Activated naive CD4-positive, alpha-beta T cell treated with anti-CD3 and anti-CD28 coated beads, Interleukin-2, amount 10 ng/mL, durations not matched to agents 7 days and 5 days (primary cell): ENCODE measurements at regions of chr13 and their contacts with region 1.

Region 1: DNA sequence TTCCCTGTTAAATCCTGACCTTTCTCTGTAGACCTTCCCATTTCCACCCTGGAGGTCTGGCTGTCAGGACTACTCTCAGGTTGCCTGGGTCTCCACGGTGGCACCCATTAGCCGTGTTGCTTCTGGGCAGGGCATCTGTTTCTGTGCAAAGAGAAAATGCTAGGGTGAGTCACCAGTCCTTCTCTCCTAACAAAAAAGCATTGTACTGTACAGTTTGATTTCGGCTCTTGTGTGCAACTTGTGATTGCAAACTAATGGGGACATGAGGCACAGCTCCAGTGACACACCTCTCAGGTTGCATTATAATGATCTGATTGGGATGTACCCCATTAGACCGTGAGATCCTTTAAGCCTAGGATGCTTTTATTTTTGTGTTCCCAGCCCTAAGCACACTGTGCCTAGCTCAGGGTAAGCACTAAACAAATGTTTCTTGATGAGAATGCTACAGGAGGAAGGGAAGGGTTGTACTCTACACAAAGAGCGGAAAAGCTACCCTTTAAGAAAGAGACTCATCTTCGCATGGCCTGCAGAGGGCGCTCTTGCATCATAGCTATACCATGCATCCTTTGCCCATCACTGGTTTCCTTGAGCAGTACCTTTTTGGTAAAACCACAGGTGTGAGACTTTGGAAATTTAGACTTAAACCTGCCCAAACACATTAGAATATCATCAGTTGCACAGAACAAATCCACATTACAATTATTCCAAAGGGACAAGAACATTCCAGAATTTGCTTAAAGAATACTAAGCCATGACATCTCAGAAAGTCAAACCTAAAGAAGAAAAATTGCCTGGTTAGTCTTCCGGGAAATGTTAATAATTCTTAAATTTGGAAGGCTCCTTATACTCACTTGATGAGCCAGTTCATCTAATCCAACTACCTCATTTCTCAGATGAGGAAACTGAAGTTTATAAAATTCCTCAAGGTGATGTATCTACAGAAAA is 20.3 kb upstream of the TRIM13 start:
- DNase-seq: peak; percentile 83
- H3K4me3 Mint-ChIP-seq: no peak overlapping the region
- H3K27ac Mint-ChIP-seq: no peak overlapping the region
- H3K4me1 Mint-ChIP-seq: peaks cover 4% of the 10 kb centered on the region
- H3K27me3 Mint-ChIP-seq: peaks cover 7% of the 10 kb centered on the region

Region 2: DNA sequence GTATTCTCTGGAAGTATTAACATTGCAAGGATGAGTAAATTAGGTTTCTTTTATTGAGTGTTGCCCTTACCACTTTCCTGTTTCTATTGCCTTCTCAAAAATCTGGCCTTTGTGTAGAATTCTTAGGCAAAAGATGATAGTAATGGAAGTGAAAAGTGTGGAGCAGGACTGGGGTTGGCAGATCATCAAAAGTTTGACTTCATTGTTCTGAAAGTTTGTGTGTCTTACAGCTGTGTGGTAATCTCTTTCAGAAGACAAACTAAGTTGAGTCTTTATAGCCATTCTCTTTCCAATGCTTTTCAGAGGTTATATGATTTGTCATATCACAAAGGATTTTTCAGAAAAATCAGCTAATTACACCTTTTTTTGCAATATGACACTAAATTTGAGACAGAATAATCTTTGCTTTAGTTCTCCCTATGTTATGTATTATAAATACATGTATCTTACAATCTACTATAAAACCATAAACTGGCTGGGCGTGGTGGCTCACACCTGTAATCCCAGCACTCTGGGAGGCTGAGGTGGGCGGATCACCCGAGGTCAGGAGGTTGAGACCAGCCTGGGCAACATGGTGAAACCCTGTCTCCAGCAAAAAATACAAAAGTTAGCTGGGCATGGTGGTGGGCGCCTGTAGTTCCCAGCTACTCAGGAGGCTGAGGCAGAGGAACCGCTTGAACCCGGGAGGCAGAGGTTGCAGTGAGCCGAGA is 30.0 kb after region 1 on chr13:
- CTCF ChIA-PET with region 1: no interaction called
- DNase-seq: no peak
- H3K4me3 Mint-ChIP-seq: no peak overlapping the region
- H3K27ac Mint-ChIP-seq: no peak overlapping the region
- H3K4me1 Mint-ChIP-seq: peaks cover 8% of the 10 kb centered on the region
- H3K27me3 Mint-ChIP-seq: no peaks in the 10 kb centered on the region

Region 3: DNA sequence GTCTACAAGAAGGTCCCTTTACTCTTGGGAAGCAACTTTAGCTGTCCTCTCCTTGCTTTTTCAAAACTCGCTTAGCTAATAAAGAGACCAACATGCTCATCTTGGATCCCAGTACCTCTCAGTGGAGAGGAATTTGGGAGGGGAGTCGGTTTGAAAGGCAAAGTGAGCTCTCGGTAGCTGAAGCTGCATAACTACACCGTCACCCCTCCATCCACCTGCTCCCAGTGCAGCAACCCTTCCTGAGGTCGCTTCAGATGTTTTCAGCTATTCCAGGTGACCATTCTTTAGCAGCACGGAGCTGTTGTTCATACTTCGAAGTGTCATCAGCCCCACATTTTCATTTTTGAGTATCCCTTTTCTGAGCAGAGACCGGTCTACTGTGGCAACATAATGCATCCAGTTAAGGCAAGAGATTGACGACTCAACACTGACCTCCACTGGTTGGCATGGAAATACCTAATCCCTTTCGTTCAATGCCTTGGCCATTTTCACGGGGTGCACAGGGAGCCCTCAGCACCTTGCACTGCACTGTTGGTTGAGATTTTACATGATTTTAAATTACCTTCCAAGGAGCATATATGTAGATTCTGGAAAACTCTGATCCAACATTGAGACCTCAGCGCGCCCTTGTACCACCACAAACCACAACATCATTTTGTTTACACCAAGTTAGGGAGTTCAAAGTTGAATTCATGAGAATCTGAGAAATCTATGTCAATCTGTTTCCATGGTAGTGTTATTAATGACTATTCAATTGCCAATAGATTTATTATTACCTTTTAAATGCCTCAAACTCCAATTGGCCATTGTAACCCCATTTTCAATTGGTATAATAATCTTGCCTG is 824.7 kb after region 1 on chr13:
- CTCF ChIA-PET with region 1: interaction called, 10 read pairs
- DNase-seq: peak; percentile 80
- H3K4me3 Mint-ChIP-seq: no peak overlapping the region
- H3K27ac Mint-ChIP-seq: no peak overlapping the region
- H3K4me1 Mint-ChIP-seq: peaks cover 12% of the 10 kb centered on the region
- H3K27me3 Mint-ChIP-seq: peaks cover 16% of the 10 kb centered on the region

Region 4: DNA sequence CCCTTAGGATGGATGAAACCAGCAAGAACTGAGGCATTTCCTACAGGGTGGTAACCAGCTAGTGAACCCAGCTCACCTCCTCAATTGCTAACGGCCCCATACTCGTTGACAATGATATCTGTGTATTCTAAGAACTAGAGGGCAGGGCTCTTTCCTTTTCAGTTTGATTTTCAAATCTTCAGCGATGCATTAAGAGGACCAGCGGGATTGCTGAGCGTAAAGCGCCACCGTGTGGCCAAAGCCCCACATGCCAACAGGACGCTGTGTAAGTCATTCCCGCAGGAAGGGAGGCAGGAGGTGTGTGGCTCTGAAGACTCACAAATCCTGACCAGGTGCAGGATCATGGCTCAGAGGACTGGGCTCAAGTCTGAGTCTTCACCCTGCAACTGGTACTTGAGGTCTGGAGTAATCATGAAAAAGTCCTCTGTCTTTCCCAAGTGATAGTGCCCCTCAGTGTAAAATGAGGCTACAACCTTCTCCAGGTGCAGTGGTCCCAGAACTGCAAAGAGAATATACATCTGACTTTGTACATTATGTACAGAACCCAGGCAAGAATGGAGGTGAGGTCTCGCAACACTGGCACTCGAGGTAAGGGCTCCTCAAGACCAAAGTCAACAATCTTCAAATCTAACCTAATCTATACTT is 1093.5 kb after region 1 on chr13:
- CTCF ChIA-PET with region 1: interaction called, 19 read pairs
- DNase-seq: peak; percentile 88
- H3K4me3 Mint-ChIP-seq: no peak overlapping the region
- H3K27ac Mint-ChIP-seq: peak overlapping the region; percentile 30
- H3K4me1 Mint-ChIP-seq: peaks cover 35% of the 10 kb centered on the region
- H3K27me3 Mint-ChIP-seq: peaks cover 22% of the 10 kb centered on the region